OCI-LY7 (cell line): ENCODE measurements at regions of chr17 and their contacts with region 1.

Region 1: GRCh38 chr17:31373150-31374093 is 18.1 kb upstream of the RAB11FIP4 start:
- DNase-seq: peak; percentile 74
- H3K4me3 ChIP-seq: no peak overlapping the region
- H3K27ac ChIP-seq: no peak overlapping the region
- H3K4me1 ChIP-seq: no peaks in the 10 kb centered on the region
- CTCF ChIP-seq: peak; percentile 91

Region 2: DNA sequence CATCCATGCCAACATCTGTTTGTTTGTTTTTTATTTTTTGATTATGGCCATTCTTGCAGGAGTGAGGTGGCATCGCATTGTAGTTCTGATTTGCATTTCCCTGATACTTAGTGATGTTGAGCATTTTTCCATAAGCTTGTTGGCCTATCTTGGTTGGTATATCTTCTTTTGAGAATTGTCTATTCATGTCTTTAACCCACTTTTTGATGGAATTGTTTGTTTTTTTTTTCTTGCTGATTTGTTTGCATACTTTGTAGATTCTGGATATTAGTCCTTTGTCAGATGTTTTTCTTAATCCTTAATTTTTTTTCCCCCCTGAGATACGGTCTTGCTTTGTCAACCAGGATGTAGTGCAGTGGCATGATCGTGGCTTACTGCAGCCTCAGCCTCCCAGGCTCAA is 359.6 kb before region 1 on chr17:
- CTCF ChIA-PET with region 1: no interaction called
- POLR2A ChIA-PET with region 1: no interaction called
- intact Hi-C with region 1: loop called (anchors 5 kb)
- DNase-seq: no peak
- H3K4me3 ChIP-seq: no peak overlapping the region
- H3K27ac ChIP-seq: no peak overlapping the region
- H3K4me1 ChIP-seq: no peaks in the 10 kb centered on the region
- CTCF ChIP-seq: no peak

Region 3: GRCh38 chr17:31313982-31314784 is 59.2 kb before region 1 on chr17 and contains the start of gene EVI2B:
- CTCF ChIA-PET with region 1: no interaction called
- POLR2A ChIA-PET with region 1: interaction called, 7 read pairs
- intact Hi-C with region 1: loop called (anchors 2 kb)
- DNase-seq: peak; percentile 87
- H3K4me3 ChIP-seq: peak within 1 kb of the TSS; percentile 73
- H3K27ac ChIP-seq: peak within 1 kb of the TSS; percentile 97
- H3K4me1 ChIP-seq: peaks cover 48% of the 10 kb centered on the region
- CTCF ChIP-seq: no peak
- total RNA-seq, gene EVI2B: 14.5 and 17.4 TPM in 2 replicates

Region 4: DNA sequence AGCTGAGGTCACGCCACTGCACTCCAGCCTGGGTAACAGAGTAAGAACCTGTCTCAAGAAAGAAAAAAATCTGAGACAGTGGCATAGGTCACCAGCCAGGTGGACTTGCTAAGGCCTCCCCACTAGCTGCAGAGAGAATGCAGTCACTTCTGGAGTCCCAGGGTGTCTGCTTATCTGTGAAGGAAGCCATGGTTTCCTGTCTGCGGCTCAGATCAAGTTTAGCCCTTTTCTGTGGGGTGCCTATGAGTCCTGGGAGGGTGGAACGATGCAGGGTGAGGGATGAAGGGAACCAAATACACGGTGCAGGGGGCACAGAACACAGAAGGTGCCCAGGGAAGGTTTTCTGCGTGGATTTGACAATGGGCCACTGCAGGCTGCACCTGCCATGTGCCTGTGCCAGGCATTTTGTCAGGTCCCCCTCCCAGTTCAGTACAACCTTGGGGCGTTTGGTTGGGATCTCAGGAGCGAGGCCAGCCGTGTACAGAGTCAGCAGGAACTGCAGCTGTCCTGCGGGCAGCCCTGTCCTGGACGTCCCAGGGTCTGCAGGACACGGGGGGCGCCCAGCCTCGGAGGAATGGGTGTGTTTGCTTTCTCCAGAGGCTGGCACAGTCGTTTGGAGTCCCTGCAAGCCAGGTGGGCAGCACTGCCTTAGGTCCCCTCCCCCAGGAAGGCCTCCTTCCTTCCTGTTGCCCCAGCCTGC is 59.8 kb after region 1 on chr17:
- CTCF ChIA-PET with region 1: no interaction called
- POLR2A ChIA-PET with region 1: no interaction called
- intact Hi-C with region 1: no loop called
- DNase-seq: no peak
- H3K4me3 ChIP-seq: no peak overlapping the region
- H3K27ac ChIP-seq: no peak overlapping the region
- H3K4me1 ChIP-seq: no peaks in the 10 kb centered on the region
- CTCF ChIP-seq: no peak

Region 5: DNA sequence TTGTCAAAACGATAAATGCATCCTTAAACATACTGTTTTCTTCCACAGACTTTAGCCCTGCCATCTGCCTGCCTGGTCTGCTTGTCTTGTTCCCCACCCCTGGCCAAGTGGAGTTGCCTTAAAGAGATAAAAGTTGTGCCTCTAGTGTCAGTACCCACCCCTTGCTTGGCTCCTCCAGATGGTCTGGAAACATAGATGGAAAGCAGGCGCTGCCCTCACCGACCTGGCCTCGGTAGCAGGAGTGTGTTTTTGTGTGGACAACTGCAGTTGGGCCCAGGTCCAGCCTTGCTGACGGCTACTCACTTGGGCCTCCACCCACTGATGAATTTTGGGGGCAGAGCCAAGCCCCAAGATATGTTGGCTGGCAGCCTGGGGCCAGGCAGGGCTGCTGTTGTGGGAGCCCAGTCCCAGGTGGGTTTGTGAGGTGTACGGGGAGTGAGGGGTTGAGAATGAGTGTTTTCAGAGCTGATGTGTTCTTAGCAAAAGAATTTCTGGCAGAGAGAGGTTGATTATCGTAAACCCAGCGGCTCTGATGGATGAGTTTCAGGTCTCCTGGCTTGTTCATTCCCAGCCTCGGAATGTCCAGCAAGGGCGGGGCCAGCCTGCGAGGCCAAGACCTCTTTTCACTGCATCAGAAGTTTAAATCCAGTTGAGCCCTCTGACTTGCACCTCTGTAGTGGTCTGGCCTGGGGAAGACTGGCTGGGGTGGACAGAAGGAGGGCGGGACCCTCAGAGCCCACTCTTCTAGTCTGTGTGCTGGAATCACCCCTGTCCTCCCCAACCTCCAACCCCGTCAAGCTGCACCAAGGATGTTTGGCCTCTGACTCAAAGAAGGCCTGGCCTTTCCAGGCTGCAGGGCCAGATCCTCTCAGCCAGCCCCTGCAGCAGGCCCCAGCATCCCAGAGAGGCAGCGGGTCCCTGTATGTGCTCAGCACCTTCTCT is 197.8 kb after region 1 on chr17:
- CTCF ChIA-PET with region 1: no interaction called
- POLR2A ChIA-PET with region 1: no interaction called
- intact Hi-C with region 1: no loop called
- DNase-seq: no peak
- H3K4me3 ChIP-seq: no peak overlapping the region
- H3K27ac ChIP-seq: no peak overlapping the region
- H3K4me1 ChIP-seq: no peaks in the 10 kb centered on the region
- CTCF ChIP-seq: no peak